Activated CD4-positive, alpha-beta memory T cell treated with anti-CD3 and anti-CD28 coated beads, Interleukin-2, amount 10 ng/mL, durations not matched to agents 7 days and 5 days (primary cell): ENCODE measurements at regions of chr2 and their contacts with region 1.

Region 1: GRCh38 chr2:223970343-223971128 is 13.3 kb downstream of the MRPL44 start:
- DNase-seq: peak; percentile 37
- H3K4me3 Mint-ChIP-seq: no peak overlapping the region
- H3K27ac Mint-ChIP-seq: no peak overlapping the region
- H3K4me1 Mint-ChIP-seq: peaks cover 5% of the 10 kb centered on the region
- H3K27me3 Mint-ChIP-seq: no peaks in the 10 kb centered on the region

Region 2: DNA sequence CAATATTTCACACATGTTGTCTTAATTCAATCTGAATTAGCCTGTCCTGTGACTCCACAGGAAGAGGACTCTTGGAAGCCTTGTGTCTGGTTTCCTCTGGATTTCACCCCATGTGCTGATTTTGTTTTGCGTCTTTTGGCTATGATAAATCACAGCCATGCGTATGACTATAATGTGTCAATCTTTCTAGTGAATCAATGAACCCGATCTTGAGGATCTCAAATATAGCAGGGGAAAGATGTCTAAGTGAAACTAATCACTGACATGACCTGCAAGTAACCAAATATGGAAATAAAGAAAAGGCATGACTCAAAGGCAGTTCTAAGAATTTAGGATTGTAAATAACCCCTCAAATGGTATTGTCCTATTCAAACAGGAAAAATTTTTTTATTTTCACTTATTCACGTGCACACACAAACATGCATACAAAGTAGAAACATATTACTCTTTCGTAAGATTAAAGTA is 33.6 kb before region 1 on chr2:
- CTCF ChIA-PET with region 1: interaction called, 12 read pairs
- POLR2A ChIA-PET with region 1: interaction called, 5 read pairs
- DNase-seq: no peak
- H3K4me3 Mint-ChIP-seq: peak overlapping the region; percentile 7
- H3K27ac Mint-ChIP-seq: peak overlapping the region; percentile 62
- H3K4me1 Mint-ChIP-seq: peaks cover 77% of the 10 kb centered on the region
- H3K27me3 Mint-ChIP-seq: no peaks in the 10 kb centered on the region

Region 3: DNA sequence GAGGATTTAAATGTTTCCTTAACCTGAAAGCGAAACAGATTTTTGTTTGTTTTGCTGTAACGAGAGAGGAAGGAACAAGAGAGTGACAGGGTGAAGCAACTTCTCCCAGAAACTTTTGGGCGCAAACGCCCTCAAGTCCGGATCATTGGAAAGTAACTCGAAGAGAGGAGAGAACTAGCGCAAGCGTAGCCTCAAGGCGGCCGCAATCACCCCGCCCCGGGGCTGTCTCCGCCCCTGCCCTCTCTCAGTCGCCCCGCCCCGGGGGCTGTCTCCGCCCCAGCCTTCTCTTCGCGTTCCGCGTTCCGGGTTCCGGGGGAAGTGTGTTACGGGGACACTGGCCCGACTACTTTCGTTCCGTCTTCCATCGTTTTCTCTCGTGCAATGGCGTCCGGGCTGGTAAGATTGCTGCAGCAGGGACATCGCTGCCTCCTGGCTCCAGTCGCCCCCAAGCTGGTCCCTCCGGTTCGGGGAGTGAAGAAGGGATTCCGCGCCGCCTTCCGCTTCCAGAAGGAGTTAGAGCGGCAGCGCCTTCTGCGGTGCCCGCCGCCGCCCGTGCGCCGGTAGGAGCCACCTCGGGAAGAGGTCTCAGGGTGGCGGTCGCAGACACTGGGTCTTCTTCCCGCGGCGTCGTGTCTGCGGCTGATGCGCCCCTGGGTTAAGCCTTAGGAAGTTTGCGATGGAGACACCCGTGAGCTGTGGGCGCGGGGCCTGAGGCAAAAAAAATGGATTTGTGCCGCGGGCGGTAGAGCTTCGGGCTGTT is 13.3 kb before region 1 on chr2 and contains the start of gene MRPL44:
- CTCF ChIA-PET with region 1: interaction called, 37 read pairs
- POLR2A ChIA-PET with region 1: interaction called, 9 read pairs
- DNase-seq: peak; percentile 97
- H3K4me3 Mint-ChIP-seq: peak within 1 kb of the TSS; percentile 91
- H3K27ac Mint-ChIP-seq: peak within 1 kb of the TSS; percentile 70
- H3K4me1 Mint-ChIP-seq: peaks cover 61% of the 10 kb centered on the region
- H3K27me3 Mint-ChIP-seq: no peaks in the 10 kb centered on the region
- total RNA-seq, gene MRPL44: 32.5 to 33.0 TPM

Region 4: DNA sequence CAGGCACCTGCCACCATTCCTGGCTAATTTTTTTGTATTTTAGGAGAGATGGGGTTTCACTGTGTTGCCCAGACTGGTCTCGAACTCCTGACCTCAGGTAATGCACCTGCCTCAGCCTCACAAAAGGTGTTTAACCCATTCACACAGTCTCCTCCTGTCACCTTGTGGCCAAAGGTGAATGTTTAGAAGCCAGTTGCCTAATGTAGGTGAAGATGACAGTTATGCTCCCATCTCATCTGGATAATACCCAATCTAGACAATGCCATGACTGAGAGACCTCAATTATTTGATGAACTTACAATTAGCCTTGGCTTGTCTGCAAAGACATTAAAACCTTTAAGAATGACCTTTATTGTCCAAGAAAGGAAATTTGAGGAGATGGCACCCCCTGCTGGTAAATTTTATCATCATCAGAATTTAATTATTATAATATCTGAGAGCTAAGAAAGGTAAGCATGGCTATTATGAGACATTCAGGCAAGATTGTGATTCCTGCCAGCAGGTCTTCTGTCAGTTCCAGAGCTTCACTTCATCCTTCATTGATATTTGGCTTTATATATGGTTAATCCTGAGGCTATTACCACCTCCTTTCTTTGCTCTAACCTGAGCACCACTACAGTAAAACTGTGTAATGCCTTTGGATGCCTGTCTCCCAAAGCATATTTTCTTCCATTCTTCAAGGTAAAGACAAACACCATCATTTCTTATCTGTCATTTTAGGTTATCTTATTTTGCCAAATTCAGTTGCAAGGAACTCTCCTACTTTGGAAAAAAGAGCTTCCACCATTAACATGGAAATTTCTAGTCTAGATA is 313.8 kb after region 1 on chr2:
- CTCF ChIA-PET with region 1: interaction called, 82 read pairs
- POLR2A ChIA-PET with region 1: interaction called, 4 read pairs
- DNase-seq: no peak
- H3K4me3 Mint-ChIP-seq: no peak overlapping the region
- H3K27ac Mint-ChIP-seq: no peak overlapping the region
- H3K4me1 Mint-ChIP-seq: no peaks in the 10 kb centered on the region
- H3K27me3 Mint-ChIP-seq: peaks cover 31% of the 10 kb centered on the region